IMR-90 (cell line): ENCODE measurements at regions of chr18 and their contacts with region 1.

Region 1: DNA sequence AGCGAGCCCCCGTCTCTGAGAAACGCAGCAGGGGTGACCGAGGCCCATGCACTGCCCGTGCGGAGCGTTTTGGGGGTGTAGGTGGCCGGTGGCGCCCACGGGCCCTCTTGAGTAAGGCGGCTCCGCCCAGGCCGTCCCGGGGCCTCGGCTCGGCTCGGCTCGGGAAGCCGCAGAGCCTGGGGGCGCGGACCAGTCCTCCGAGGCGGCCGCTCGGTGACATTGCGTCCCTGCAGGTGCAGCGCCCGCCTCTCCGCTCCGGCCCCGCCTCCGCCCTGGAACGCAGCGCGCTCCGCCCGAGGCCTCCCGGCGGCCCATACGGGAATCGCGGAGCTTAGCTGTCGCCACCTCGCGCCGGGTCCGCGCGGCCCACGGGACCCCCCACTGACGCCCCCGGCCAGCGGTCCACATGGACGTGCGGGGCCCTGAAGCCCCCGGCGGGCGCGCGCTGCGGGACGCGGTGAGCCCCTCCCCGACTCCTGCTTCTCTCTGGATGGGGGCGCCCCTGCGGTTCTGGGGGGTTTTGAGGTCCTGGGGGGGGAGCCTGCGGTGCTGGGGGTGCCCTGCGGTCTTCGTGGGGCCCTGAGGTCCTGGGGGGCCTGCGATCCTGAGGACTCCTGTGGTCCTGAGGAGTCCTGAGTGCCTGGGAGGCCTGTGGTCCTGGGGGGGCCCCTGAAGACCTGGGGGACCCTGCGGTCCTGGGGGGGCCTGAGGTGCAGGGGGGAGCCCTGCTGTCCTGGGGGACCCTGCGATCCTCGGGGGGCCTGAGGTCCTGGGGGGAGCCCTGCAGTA is at the start of gene HSBP1L1:
- DNase-seq: no peak
- ATAC-seq: peak; percentile 60
- H3K4me3 ChIP-seq: peak within 1 kb of the TSS; percentile 66
- H3K27ac ChIP-seq: peak within 1 kb of the TSS; percentile 84
- H3K4me1 ChIP-seq: peaks cover 9% of the 10 kb centered on the region
- H3K27me3 ChIP-seq: no peaks in the 10 kb centered on the region
- CTCF ChIP-seq: peak; percentile 32; the same call in 1 of the 2 replicates
- POLR2A ChIP-seq: no peak; the same call in 1 of the 2 replicates
- RAD21 ChIP-seq: 0 out of 2 replicates have a peak, but pooled peaks have one; percentile 10
- total RNA-seq, gene HSBP1L1: 7.8 and 8.6 TPM in 2 replicates

Region 2: GRCh38 chr18:79797518-79798345 is 166.8 kb before region 1 on chr18 and contains the start of gene KCNG2:
- CTCF ChIA-PET with region 1: no interaction called
- POLR2A ChIA-PET with region 1: no interaction called
- dilution Hi-C with region 1: no loop called
- in situ Hi-C with region 1: no loop called
- intact Hi-C with region 1: loop called (anchors 5 kb)
- DNase-seq: no peak
- ATAC-seq: peak; percentile 82
- H3K4me3 ChIP-seq: peak within 1 kb of the TSS; percentile 42
- H3K27ac ChIP-seq: no peak within 1 kb of the TSS
- H3K4me1 ChIP-seq: peaks cover 3% of the 10 kb centered on the region; the same call in 1 of the 2 replicates
- H3K27me3 ChIP-seq: peaks cover 30% of the 10 kb centered on the region
- CTCF ChIP-seq: peak; percentile 34
- POLR2A ChIP-seq: no peak
- RAD21 ChIP-seq: 0 out of 2 replicates have a peak, but pooled peaks have one; percentile 8
- total RNA-seq, gene KCNG2: not detected in 2 replicates

Region 3: DNA sequence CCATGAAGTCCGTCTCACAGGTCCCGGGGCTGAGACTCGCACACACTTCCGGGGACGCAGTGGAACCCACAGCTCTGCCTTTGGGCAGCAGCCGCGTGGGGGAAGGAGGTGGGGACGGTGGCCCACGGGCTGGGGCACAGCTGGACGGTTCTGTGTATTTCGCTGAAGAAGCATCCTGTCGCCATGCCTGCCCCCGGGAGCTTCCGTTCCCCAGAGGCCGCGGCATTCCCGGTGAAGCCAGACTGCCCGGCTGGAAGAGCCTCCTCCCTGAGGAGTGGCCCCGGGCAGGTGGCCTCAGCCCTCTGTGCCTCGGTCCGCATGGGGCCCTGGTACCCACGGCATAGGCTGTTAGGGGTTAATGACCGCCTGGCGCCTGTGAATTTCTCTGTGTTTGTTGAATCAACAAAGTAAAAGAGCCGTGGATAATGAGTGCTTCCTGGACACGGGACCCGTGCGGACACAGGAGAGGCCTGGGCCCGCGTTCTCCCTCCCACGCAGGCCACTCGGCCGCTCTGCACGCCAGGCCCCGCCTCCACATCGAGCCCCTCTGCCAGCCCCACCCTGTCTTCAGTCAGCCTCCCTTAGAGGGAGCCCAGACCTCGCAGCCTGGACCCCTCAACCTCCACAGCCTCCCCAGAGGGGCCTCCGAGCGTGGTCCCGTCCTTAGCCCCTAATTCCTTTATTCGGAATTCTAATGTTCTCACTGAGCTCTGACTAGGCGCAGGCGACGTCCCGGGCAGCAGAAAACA is 115.8 kb before region 1 on chr18:
- CTCF ChIA-PET with region 1: no interaction called
- POLR2A ChIA-PET with region 1: no interaction called
- dilution Hi-C with region 1: no loop called
- in situ Hi-C with region 1: no loop called
- intact Hi-C with region 1: loop called (anchors 10 kb)
- DNase-seq: no peak
- ATAC-seq: no peak
- H3K4me3 ChIP-seq: no peak overlapping the region
- H3K27ac ChIP-seq: no peak overlapping the region
- H3K4me1 ChIP-seq: peaks cover 10% of the 10 kb centered on the region
- H3K27me3 ChIP-seq: no peaks in the 10 kb centered on the region
- CTCF ChIP-seq: no peak
- POLR2A ChIP-seq: no peak
- RAD21 ChIP-seq: no peak